ENCODE measurements at regions of chr17 and their contacts with region 1.

Region 1: DNA sequence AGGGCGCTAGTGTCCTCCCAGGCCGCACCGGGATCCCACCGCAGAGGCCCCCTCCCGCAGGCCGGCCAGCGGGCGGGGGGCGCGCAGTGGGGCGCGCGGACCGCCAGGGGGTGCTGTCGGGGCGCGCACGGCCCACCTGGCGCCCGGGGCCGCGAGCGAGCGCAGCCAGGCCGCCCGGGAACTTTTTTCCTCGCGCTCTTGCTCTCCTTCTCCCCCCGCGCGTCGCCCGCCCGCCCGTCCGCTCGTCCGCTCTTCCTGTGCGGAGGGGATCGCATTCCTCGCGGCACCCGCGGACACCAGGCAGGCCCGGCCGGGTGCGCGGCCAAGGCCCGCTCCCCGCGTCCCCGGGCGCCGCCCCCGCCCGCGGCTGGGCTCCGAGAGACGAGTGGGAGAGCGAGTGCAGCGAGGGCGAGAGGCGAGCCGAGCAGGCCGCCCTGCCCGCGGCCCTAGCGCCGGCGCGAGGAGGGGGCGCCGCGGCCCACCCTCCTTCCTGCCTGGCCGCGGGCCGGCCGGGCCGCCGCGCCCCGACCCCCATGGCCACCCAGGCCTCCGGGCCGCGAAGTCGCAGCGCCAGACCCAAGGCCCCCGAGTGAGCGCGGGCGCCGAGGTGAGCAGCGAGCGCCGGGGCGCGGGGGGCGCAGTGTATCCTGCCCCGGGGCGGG is at the start of gene RAI1:
- DNase-seq: peak; percentile 92
- H3K4me3 Mint-ChIP-seq: peak within 1 kb of the TSS; percentile 91
- H3K27ac Mint-ChIP-seq: peak within 1 kb of the TSS; percentile 90
- H3K4me1 Mint-ChIP-seq: peaks cover 25% of the 10 kb centered on the region
- H3K27me3 Mint-ChIP-seq: peaks cover 12% of the 10 kb centered on the region
- total RNA-seq, gene RAI1: 30.1 and 34.5 TPM in 2 replicates

Region 2: GRCh38 chr17:17663160-17664063 is 17.9 kb before region 1 on chr17:
- intact Hi-C with region 1: no loop called
- DNase-seq: peak; percentile 89
- H3K4me3 Mint-ChIP-seq: peak overlapping the region; percentile 17
- H3K27ac Mint-ChIP-seq: peak overlapping the region; percentile 27
- H3K4me1 Mint-ChIP-seq: peaks cover 13% of the 10 kb centered on the region
- H3K27me3 Mint-ChIP-seq: no peaks in the 10 kb centered on the region

Region 3: DNA sequence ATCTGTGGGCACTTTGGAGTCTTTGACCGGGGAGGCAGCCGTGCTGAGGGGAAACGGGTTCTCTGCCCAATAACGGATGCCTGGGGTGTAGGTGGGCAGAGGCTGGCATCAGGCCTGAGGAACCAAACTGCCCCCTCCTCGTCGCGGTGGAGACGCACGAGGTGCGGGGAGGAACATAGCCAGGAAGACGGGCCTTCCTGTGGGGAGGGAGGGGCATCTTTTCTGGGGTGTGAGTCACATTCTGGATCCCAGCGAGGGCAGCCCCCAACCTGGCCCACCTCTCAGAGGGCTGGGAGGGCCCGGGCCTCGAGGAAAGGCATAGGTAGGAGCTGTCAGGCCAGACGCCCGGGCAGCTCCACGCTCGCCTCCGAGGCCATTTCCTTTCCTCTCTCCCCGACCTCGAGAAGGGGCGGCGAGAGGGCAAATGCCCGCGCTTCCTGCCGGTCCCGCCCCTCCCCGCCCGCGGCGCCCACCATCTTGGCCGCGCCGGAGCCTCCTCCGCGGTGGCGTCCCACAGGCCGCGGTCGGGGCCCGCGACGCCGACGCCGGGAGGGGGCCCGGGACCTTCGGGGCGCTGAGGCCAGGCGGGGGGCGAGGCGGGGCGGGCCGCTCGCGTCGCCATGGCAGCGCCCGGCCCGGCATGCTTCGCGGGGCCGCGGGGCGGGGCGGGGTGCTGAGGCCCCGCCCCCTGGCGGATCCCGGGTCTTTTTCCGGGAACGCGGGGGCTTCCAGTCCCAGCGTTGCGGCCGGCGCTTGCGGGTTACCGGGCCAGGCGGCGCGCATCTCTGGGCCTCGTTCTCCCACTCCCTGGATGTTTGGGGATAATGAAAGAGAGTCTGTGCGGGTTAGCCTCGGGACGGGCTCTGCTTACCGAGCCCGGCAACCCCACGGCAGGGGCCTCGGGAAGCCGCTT is 13.1 kb after region 1 on chr17:
- intact Hi-C with region 1: loop called (anchors 1 kb)
- DNase-seq: peak; percentile 93
- H3K4me3 Mint-ChIP-seq: peak overlapping the region; percentile 90
- H3K27ac Mint-ChIP-seq: peak overlapping the region; percentile 97
- H3K4me1 Mint-ChIP-seq: peaks cover 56% of the 10 kb centered on the region
- H3K27me3 Mint-ChIP-seq: no peaks in the 10 kb centered on the region

Region 4: GRCh38 chr17:17723354-17724261 is 42.3 kb after region 1 on chr17:
- intact Hi-C with region 1: loop called (anchors 5 kb)
- DNase-seq: peak; percentile 74
- H3K4me3 Mint-ChIP-seq: peak overlapping the region; percentile 91
- H3K27ac Mint-ChIP-seq: no peak overlapping the region
- H3K4me1 Mint-ChIP-seq: peaks cover 31% of the 10 kb centered on the region
- H3K27me3 Mint-ChIP-seq: peaks cover 35% of the 10 kb centered on the region

Region 5: DNA sequence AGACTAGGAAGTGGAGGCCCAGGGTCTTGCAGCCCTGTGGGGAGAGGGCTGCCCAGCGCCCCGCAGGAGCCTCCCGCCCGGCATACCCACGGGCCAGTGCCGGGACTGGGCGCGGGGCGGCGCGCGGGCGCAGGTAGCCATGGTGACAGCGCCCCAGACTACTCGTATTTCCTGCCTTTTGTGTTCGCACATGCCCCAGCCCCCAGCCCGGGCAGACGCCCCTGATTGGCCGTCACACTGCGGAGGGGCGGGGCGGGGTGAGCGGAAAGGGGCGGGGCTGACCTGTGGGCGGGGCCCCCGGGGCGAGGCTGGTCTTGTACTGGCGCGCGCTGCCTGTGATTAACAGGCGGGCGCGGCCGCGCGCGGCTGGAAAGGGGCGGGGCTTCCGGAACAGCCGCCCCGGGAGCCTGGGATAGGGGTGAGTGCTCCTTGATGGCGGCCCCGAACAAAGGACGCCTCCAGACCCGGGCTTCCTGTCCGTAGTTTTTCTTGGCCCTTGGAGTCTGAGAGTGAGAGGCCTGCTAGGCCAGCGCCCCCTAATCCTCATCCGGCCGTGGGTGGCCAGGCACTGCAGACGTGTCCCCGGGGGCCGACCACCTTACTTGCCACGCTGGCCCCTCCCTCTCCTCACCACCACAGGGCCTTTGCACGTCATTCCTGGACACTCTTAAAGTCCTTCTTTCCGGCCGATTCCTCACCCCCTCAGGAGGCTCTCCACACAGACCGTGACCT is 70.9 kb after region 1 on chr17:
- intact Hi-C with region 1: loop called (anchors 2 kb)
- DNase-seq: peak; percentile 99
- H3K4me3 Mint-ChIP-seq: peak overlapping the region; percentile 93
- H3K27ac Mint-ChIP-seq: peak overlapping the region; percentile 95
- H3K4me1 Mint-ChIP-seq: peaks cover 44% of the 10 kb centered on the region
- H3K27me3 Mint-ChIP-seq: no peaks in the 10 kb centered on the region

Region 6: GRCh38 chr17:17792551-17793377 is 111.4 kb after region 1 on chr17:
- intact Hi-C with region 1: loop called (anchors 10 kb)
- DNase-seq: peak; percentile 92
- H3K4me3 Mint-ChIP-seq: peak overlapping the region; percentile 58
- H3K27ac Mint-ChIP-seq: peak overlapping the region; percentile 74
- H3K4me1 Mint-ChIP-seq: peaks cover 17% of the 10 kb centered on the region
- H3K27me3 Mint-ChIP-seq: no peaks in the 10 kb centered on the region

Region 7: GRCh38 chr17:17859909-17860765 is 178.8 kb after region 1 on chr17:
- intact Hi-C with region 1: loop called (anchors 1 kb)
- DNase-seq: peak; percentile 91
- H3K4me3 Mint-ChIP-seq: no peak overlapping the region
- H3K27ac Mint-ChIP-seq: no peak overlapping the region
- H3K4me1 Mint-ChIP-seq: peaks cover 21% of the 10 kb centered on the region
- H3K27me3 Mint-ChIP-seq: no peaks in the 10 kb centered on the region

Region 8: GRCh38 chr17:17972126-17972951 is 291.0 kb after region 1 on chr17 and contains the starts of genes DRC3 and TOM1L2:
- intact Hi-C with region 1: loop called (anchors 5 kb)
- DNase-seq: peak; percentile 100
- H3K4me3 Mint-ChIP-seq: peak within 1 kb of the TSS; percentile 94
- H3K27ac Mint-ChIP-seq: peak within 1 kb of the TSS; percentile 92
- H3K4me1 Mint-ChIP-seq: peaks cover 22% of the 10 kb centered on the region
- H3K27me3 Mint-ChIP-seq: no peaks in the 10 kb centered on the region
- total RNA-seq, gene DRC3: 0.42 TPM in 1 of 2 replicates, not detected in the other
- total RNA-seq, gene TOM1L2: 8.8 and 10.0 TPM in 2 replicates

Measured in activated CD4-positive, alpha-beta T cell treated with anti-CD3 and anti-CD28 coated beads, Interleukin-2, amount 10 ng/mL, durations not matched to agents 24 days and 14 days (primary cell).